ENCODE measurements at regions of chr1 and their contacts with region 1.

Region 1: DNA sequence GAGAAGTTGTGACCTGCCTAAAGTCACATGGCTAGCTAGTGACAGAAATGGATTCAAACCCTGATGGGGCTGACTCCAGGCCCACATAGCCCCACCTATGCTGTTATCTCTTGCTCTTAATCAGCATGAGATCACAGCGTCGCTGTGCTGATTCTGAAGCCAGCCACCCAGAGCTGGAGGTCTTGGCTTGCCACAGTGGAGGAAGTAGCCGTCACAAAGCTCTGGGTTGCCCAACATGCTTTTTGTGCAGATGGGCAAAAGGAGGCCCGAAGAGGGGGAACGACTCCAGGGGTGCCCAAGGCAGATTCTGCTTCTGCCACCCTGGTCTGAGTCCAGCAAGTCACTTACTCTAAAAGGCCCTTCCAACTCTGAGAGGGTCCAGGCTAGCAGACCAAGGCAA is 14.7 kb upstream of the MFSD2A start:
- DNase-seq: no peak
- H3K4me3 Mint-ChIP-seq: no peak overlapping the region
- H3K27ac Mint-ChIP-seq: no peak overlapping the region
- H3K4me1 Mint-ChIP-seq: peaks cover 27% of the 10 kb centered on the region
- H3K27me3 Mint-ChIP-seq: no peaks in the 10 kb centered on the region
- CTCF ChIP-seq: no peak

Region 2: DNA sequence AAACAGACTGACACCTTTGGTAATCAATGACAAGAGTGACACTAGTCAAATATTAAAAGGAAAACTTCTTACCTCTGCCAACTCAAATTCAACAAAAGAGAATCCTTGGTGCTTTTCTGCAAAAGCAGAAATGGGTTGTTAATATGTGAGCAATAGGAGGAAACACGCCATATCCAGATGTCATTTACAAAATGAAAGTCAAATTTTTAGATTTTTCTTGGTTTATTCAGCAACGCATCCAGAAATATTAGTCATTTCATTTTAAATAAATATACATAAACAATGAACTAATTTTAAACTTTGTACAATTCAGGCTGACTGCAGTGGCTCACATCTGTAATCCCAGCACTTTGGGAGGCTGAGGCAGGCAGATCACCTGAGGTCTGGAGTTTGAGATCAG is 386.0 kb before region 1 on chr1:
- CTCF ChIA-PET with region 1: no interaction called
- POLR2A ChIA-PET with region 1: no interaction called
- intact Hi-C with region 1: no loop called
- DNase-seq: no peak
- H3K4me3 Mint-ChIP-seq: no peak overlapping the region
- H3K27ac Mint-ChIP-seq: no peak overlapping the region
- H3K4me1 Mint-ChIP-seq: no peaks in the 10 kb centered on the region
- H3K27me3 Mint-ChIP-seq: no peaks in the 10 kb centered on the region
- CTCF ChIP-seq: no peak

Region 3: GRCh38 chr1:39799770-39800470 is 140.3 kb before region 1 on chr1:
- CTCF ChIA-PET with region 1: no interaction called
- POLR2A ChIA-PET with region 1: no interaction called
- intact Hi-C with region 1: no loop called
- DNase-seq: peak; percentile 82
- H3K4me3 Mint-ChIP-seq: peak overlapping the region; percentile 19
- H3K27ac Mint-ChIP-seq: peak overlapping the region; percentile 78
- H3K4me1 Mint-ChIP-seq: peaks cover 26% of the 10 kb centered on the region
- H3K27me3 Mint-ChIP-seq: no peaks in the 10 kb centered on the region
- CTCF ChIP-seq: peak; percentile 96

Region 4: GRCh38 chr1:39926343-39926793 is 13.9 kb before region 1 on chr1:
- CTCF ChIA-PET with region 1: interaction called, 3 read pairs
- POLR2A ChIA-PET with region 1: interaction called, 11 read pairs
- intact Hi-C with region 1: no loop called
- DNase-seq: peak; percentile 63
- H3K4me3 Mint-ChIP-seq: peak overlapping the region; percentile 20
- H3K27ac Mint-ChIP-seq: peak overlapping the region; percentile 81
- H3K4me1 Mint-ChIP-seq: peaks cover 49% of the 10 kb centered on the region
- H3K27me3 Mint-ChIP-seq: no peaks in the 10 kb centered on the region
- CTCF ChIP-seq: no peak

Region 5: GRCh38 chr1:39960431-39960958 is 20.2 kb after region 1 on chr1:
- CTCF ChIA-PET with region 1: interaction called, 4 read pairs
- POLR2A ChIA-PET with region 1: interaction called, 139 read pairs
- intact Hi-C with region 1: no loop called
- DNase-seq: peak; percentile 84
- H3K4me3 Mint-ChIP-seq: no peak overlapping the region
- H3K27ac Mint-ChIP-seq: peak overlapping the region; percentile 39
- H3K4me1 Mint-ChIP-seq: peaks cover 28% of the 10 kb centered on the region
- H3K27me3 Mint-ChIP-seq: no peaks in the 10 kb centered on the region
- CTCF ChIP-seq: no peak

Measured in MCF 10A (cell line).